ENCODE measurements at regions of chr9 and their contacts with region 1.

Region 1: GRCh38 chr9:127903557-127904475 is 4.4 kb upstream of the ST6GALNAC6 start:
- DNase-seq: peak; percentile 90
- H3K4me3 Mint-ChIP-seq: peak overlapping the region; percentile 95
- H3K27ac Mint-ChIP-seq: peak overlapping the region; percentile 100
- H3K4me1 Mint-ChIP-seq: peaks cover 49% of the 10 kb centered on the region
- H3K27me3 Mint-ChIP-seq: no peaks in the 10 kb centered on the region

Region 2: DNA sequence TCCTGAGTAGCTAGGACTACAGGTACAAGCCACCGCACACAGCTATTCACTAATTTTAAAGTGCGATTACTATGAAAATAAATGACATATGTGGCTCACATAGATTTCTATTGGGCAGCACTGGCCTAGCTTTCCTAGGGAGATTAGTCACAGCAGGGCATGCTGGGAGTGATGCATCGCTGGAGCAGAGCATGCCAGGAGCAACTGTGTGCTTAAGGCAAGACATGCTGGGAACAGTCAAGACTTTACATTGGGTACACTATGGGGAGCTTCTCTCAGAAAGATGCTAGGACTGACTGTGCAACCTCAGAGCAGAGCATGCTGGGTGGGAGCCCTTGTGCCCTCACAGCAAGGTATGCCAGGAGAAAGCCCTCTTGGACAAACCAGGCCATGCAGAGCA is 13.8 kb before region 1 on chr9:
- CTCF ChIA-PET with region 1: interaction called, 4 read pairs
- POLR2A ChIA-PET with region 1: interaction called, 10 read pairs
- DNase-seq: no peak
- H3K4me3 Mint-ChIP-seq: no peak overlapping the region
- H3K27ac Mint-ChIP-seq: no peak overlapping the region
- H3K4me1 Mint-ChIP-seq: peaks cover 23% of the 10 kb centered on the region
- H3K27me3 Mint-ChIP-seq: no peaks in the 10 kb centered on the region

Region 3: GRCh38 chr9:127916665-127917613 is 13.1 kb after region 1 on chr9 and contains the start of gene ST6GALNAC4:
- CTCF ChIA-PET with region 1: interaction called, 9 read pairs
- POLR2A ChIA-PET with region 1: interaction called, 69 read pairs
- DNase-seq: peak; percentile 96
- H3K4me3 Mint-ChIP-seq: peak within 1 kb of the TSS; percentile 72
- H3K27ac Mint-ChIP-seq: peak within 1 kb of the TSS; percentile 65
- H3K4me1 Mint-ChIP-seq: peaks cover 65% of the 10 kb centered on the region
- H3K27me3 Mint-ChIP-seq: peaks cover under 1% of the 10 kb centered on the region
- total RNA-seq, gene ST6GALNAC4: 19.4 to 21.5 TPM

Region 4: GRCh38 chr9:127937388-127938280 is 33.8 kb after region 1 on chr9 and contains the start of gene DPM2:
- CTCF ChIA-PET with region 1: no interaction called
- POLR2A ChIA-PET with region 1: interaction called, 10 read pairs
- DNase-seq: peak; percentile 89
- H3K4me3 Mint-ChIP-seq: peak within 1 kb of the TSS; percentile 86
- H3K27ac Mint-ChIP-seq: peak within 1 kb of the TSS; percentile 82
- H3K4me1 Mint-ChIP-seq: peaks cover 42% of the 10 kb centered on the region
- H3K27me3 Mint-ChIP-seq: no peaks in the 10 kb centered on the region
- total RNA-seq, gene DPM2: 48.2 TPM

Measured in activated CD4-positive, alpha-beta memory T cell treated with anti-CD3 and anti-CD28 coated beads, Interleukin-2, amount 10 ng/mL, durations not matched to agents 7 days and 5 days (primary cell).